Naive thymus-derived CD4-positive, alpha-beta T cell (primary cell): ENCODE measurements at regions of chr4 and their contacts with region 1.

Region 1: DNA sequence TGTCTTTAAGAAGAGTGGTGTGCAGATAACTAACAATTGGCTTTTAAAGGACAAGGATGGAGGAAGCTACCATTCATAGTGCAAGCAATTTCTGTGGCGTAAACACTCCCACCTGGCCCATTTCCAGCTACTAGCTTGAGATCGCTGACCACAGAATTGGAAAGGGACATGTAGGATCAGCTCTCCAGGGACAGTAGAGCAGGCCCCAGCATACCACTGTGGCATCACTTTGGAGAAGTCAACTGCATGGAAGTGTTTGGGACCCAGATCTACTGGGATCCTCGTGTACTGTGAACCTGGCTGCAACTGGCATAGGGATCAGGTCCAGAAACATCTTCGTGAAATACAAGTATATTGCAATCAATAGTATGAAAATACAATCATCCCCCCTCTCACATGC is 515.0 kb downstream of the INPP4B start:
- DNase-seq: no peak
- ATAC-seq: no peak
- H3K4me3 ChIP-seq: no peak overlapping the region
- H3K4me3 Mint-ChIP-seq: peak overlapping the region in 5 of 10 donors; percentile 5 to 48 (median 17)
- H3K27ac ChIP-seq: no peak overlapping the region
- H3K27ac Mint-ChIP-seq: peak overlapping the region in 2 of 9 donors; percentile 21 to 41
- H3K4me1 ChIP-seq: peaks cover 3 to 20% of the 10 kb centered on the region in 2 donors
- H3K4me1 Mint-ChIP-seq: peaks cover 28 to 92% (median 85%) of the 10 kb centered on the region in 7 donors
- H3K27me3 ChIP-seq: no peaks in the 10 kb centered on the region
- H3K27me3 Mint-ChIP-seq: no peaks in the 10 kb centered on the region

Region 2: DNA sequence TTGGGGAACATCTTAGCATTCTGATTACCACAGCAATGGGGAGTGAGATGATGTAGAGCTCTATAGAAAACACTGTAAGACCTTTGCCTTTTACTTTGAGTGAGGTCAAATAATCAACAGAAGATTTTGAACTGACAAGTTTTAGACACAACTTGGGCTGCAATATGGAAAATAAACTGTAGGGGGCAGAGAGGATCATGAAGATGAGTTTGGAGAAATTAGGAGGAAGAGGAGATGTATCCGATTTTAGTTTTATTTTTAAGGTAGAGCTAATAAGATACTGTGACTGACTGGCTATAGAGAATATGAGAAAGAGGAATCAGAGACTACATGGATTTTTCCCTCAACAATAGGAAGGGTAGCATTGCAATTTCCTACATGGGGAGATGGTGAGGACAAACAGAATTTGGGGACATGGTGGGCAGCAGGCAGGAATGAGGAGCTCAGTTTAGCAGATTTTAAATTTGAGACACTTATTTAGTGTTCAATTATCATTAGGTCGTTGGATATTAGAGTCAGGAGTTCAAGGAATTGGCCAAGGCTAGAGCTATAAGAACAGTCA is 48.2 kb before region 1 on chr4:
- CTCF ChIA-PET with region 1: interaction called, 5 read pairs
- POLR2A ChIA-PET with region 1: no interaction called
- intact Hi-C with region 1: loop called in 1 of 2 experiments (anchors 5 kb)
- DNase-seq: peak in 7 of 9 donors; percentile 26 to 53 (median 38)
- ATAC-seq: peak; percentile 64
- H3K4me3 ChIP-seq: no peak overlapping the region
- H3K4me3 Mint-ChIP-seq: no peak overlapping the region
- H3K27ac ChIP-seq: no peak overlapping the region
- H3K27ac Mint-ChIP-seq: no peak overlapping the region
- H3K4me1 ChIP-seq: peaks cover 7 to 15% of the 10 kb centered on the region in 2 donors
- H3K4me1 Mint-ChIP-seq: peaks cover 9 to 35% (median 25%) of the 10 kb centered on the region in 7 donors
- H3K27me3 ChIP-seq: no peaks in the 10 kb centered on the region
- H3K27me3 Mint-ChIP-seq: no peaks in the 10 kb centered on the region

Region 3: GRCh38 chr4:142314686-142315085 is 16.4 kb before region 1 on chr4:
- CTCF ChIA-PET with region 1: no interaction called
- POLR2A ChIA-PET with region 1: interaction called, 3 read pairs
- intact Hi-C with region 1: loop called in 1 of 2 experiments (anchors 2 kb)
- DNase-seq: no peak
- ATAC-seq: no peak
- H3K4me3 ChIP-seq: no peak overlapping the region
- H3K4me3 Mint-ChIP-seq: peak overlapping the region in 9 of 10 donors; percentile 48 to 72 (median 61)
- H3K27ac ChIP-seq: no peak overlapping the region
- H3K27ac Mint-ChIP-seq: peak overlapping the region in 6 of 9 donors; percentile 38 to 87 (median 70)
- H3K4me1 ChIP-seq: peaks cover 17 to 43% of the 10 kb centered on the region in 2 donors
- H3K4me1 Mint-ChIP-seq: peaks cover 36 to 93% (median 79%) of the 10 kb centered on the region in 7 donors
- H3K27me3 ChIP-seq: no peaks in the 10 kb centered on the region
- H3K27me3 Mint-ChIP-seq: no peaks in the 10 kb centered on the region

Region 4: GRCh38 chr4:142347241-142347640 is 16.1 kb after region 1 on chr4:
- CTCF ChIA-PET with region 1: interaction called, 3 read pairs
- POLR2A ChIA-PET with region 1: interaction called, 5 read pairs
- intact Hi-C with region 1: loop called in 1 of 2 experiments (anchors 2 kb)
- DNase-seq: no peak
- ATAC-seq: no peak
- H3K4me3 ChIP-seq: peak overlapping the region; percentile 3
- H3K4me3 Mint-ChIP-seq: peak overlapping the region in 9 of 10 donors; percentile 45 to 85 (median 75)
- H3K27ac ChIP-seq: no peak overlapping the region
- H3K27ac Mint-ChIP-seq: peak overlapping the region in 6 of 9 donors; percentile 43 to 94 (median 84)
- H3K4me1 ChIP-seq: peaks cover 36 to 67% of the 10 kb centered on the region in 2 donors
- H3K4me1 Mint-ChIP-seq: peaks cover 41 to 99% (median 93%) of the 10 kb centered on the region in 7 donors
- H3K27me3 ChIP-seq: no peaks in the 10 kb centered on the region
- H3K27me3 Mint-ChIP-seq: no peaks in the 10 kb centered on the region

Region 5: GRCh38 chr4:143424276-143424675 is 1093.1 kb after region 1 on chr4:
- CTCF ChIA-PET with region 1: no interaction called
- POLR2A ChIA-PET with region 1: no interaction called
- intact Hi-C with region 1: no loop called
- DNase-seq: no peak
- ATAC-seq: no peak
- H3K4me3 ChIP-seq: no peak overlapping the region
- H3K4me3 Mint-ChIP-seq: no peak overlapping the region
- H3K27ac ChIP-seq: no peak overlapping the region
- H3K27ac Mint-ChIP-seq: no peak overlapping the region
- H3K4me1 ChIP-seq: no peaks in the 10 kb centered on the region
- H3K4me1 Mint-ChIP-seq: no peaks in the 10 kb centered on the region
- H3K27me3 ChIP-seq: no peaks in the 10 kb centered on the region
- H3K27me3 Mint-ChIP-seq: peaks cover 0 to 9% (median 6%) of the 10 kb centered on the region in 5 donors